ENCODE measurements at regions of chr2 and their contacts with region 1.

Region 1: DNA sequence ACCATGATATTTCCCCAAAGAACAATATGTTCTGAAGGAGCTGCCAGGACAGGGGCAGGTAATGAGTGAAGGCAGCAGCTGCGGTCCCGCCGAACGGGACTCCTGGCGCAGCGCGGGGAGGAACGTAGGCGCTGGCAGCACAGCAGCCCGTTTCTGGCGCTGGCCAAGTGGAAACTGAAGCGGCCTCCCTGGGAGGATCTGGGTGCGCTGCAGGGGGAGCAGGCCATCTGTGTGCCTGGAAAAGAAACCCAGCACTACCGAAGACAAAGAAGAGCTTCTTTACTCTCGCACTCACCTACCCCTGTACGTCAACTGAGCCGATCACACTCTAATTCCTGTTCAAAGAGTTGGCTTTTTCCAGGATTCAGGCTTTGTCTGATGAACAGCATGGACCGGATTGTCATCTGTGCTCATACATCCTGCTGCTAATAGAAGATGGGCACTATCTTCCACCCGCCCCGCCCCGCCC is 11.8 kb downstream of the G6PC2 start:
- DNase-seq: peak in 1 of 14 experiments; percentile 7
- ATAC-seq: no peak
- H3K4me3 ChIP-seq: peak overlapping the region; percentile 8
- H3K4me3 Mint-ChIP-seq: no peak overlapping the region
- H3K27ac ChIP-seq: no peak overlapping the region
- H3K27ac Mint-ChIP-seq: no peak overlapping the region
- H3K4me1 ChIP-seq: peaks cover 8% of the 10 kb centered on the region
- H3K4me1 Mint-ChIP-seq: peaks cover 8% of the 10 kb centered on the region
- H3K27me3 ChIP-seq: peaks cover 5 to 7% of the 10 kb centered on the region in 2 experiments
- H3K27me3 Mint-ChIP-seq: peaks cover 35% of the 10 kb centered on the region
- CTCF ChIP-seq: no peak

Region 2: DNA sequence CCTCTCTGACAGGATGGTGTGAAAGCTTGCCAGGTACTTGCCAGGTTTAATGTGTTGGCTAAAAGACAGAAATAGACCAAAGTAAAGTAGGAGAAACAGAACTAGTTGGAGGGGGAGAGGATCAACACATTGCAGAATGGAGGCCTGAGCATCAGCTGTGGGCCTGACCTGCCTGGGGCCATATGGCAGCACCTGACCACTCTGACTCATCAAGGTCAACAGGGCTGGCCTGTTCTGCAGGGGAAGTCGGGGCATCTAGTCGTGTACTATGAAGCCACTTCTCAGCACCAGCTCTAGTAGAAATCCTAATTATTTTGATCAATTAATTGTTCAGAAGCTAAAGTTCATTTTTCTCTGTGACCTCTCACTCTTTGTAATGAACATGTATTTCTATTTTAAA is 146.3 kb before region 1 on chr2:
- CTCF ChIA-PET with region 1: no interaction called
- POLR2A ChIA-PET with region 1: no interaction called
- intact Hi-C with region 1: loop called in 1 of 2 experiments (anchors 10 kb)
- DNase-seq: no peak
- ATAC-seq: no peak
- H3K4me3 ChIP-seq: no peak overlapping the region
- H3K4me3 Mint-ChIP-seq: no peak overlapping the region
- H3K27ac ChIP-seq: no peak overlapping the region
- H3K27ac Mint-ChIP-seq: no peak overlapping the region
- H3K4me1 ChIP-seq: no peaks in the 10 kb centered on the region
- H3K4me1 Mint-ChIP-seq: no peaks in the 10 kb centered on the region
- H3K27me3 ChIP-seq: no peaks in the 10 kb centered on the region
- H3K27me3 Mint-ChIP-seq: no peaks in the 10 kb centered on the region
- CTCF ChIP-seq: no peak

Region 3: DNA sequence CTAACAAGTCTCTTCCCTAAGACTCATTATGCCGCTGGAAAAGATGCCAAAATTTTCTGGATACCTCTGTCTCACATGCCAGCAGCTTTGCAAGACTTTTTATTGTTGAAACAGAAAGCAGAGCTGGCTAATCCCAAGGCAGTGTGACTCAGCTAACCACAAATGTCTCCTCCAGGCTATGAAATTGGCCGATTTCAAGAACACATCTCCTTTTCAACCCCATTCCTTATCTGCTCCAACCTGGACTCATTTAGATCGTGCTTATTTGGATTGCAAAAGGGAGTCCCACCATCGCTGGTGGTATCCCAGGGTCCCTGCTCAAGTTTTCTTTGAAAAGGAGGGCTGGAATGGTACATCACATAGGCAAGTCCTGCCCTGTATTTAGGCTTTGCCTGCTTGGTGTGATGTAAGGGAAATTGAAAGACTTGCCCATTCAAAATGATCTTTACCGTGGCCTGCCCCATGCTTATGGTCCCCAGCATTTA is 182.7 kb after region 1 on chr2:
- CTCF ChIA-PET with region 1: no interaction called
- POLR2A ChIA-PET with region 1: no interaction called
- intact Hi-C with region 1: no loop called
- DNase-seq: peak in 2 of 14 experiments; percentile 19 to 27
- ATAC-seq: no peak
- H3K4me3 ChIP-seq: no peak overlapping the region
- H3K4me3 Mint-ChIP-seq: no peak overlapping the region
- H3K27ac ChIP-seq: no peak overlapping the region
- H3K27ac Mint-ChIP-seq: no peak overlapping the region
- H3K4me1 ChIP-seq: peaks cover 11% of the 10 kb centered on the region
- H3K4me1 Mint-ChIP-seq: peaks cover 9% of the 10 kb centered on the region
- H3K27me3 ChIP-seq: no peaks in the 10 kb centered on the region
- H3K27me3 Mint-ChIP-seq: peaks cover 10% of the 10 kb centered on the region
- CTCF ChIP-seq: no peak

Measured in CD4-positive, alpha-beta T cell (primary cell).